Calu3 (cell line): ENCODE measurements at regions of chr3 and their contacts with region 1.

Region 1: GRCh38 chr3:63818281-63819150 is 583 bp upstream of the C3orf49 start:
- DNase-seq: peak; percentile 66
- H3K4me3 Mint-ChIP-seq: no peak overlapping the region
- H3K27ac Mint-ChIP-seq: no peak overlapping the region
- H3K4me1 Mint-ChIP-seq: peaks cover 26% of the 10 kb centered on the region
- H3K27me3 Mint-ChIP-seq: no peaks in the 10 kb centered on the region
- CTCF ChIP-seq: peak; percentile 62

Region 2: DNA sequence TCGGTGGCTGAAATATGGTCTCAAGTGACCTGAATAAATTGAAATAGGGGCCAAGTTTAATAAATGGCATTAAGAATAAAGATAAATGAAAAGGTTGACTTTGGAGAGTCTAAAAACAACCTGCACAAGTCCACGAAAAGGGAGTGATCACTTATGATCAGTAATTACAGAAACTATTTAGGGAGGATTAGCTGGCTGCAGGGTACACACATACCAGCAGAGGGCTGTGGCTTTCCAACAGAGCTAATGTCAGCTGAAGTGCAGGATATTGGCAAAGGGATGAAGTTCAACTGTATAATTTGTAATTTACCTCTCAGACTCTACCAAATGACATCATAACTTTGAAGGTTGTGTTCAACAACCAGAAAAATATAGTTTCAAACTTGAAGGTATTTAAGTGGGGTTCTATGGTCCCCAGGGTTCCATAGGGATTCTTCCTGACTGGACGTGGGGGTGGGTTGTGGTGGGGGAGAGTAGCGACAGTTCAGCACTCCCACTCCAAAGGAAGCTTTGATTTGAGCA is 453.5 kb before region 1 on chr3:
- CTCF ChIA-PET with region 1: interaction called, 3 read pairs
- intact Hi-C with region 1: loop called (anchors 1 kb)
- DNase-seq: peak; percentile 28
- H3K4me3 Mint-ChIP-seq: no peak overlapping the region
- H3K27ac Mint-ChIP-seq: no peak overlapping the region
- H3K4me1 Mint-ChIP-seq: peaks cover 8% of the 10 kb centered on the region
- H3K27me3 Mint-ChIP-seq: peaks cover 24% of the 10 kb centered on the region
- CTCF ChIP-seq: peak; percentile 23

Region 3: GRCh38 chr3:63576901-63577335 is 241.6 kb before region 1 on chr3:
- CTCF ChIA-PET with region 1: no interaction called
- intact Hi-C with region 1: loop called (anchors 10 kb)
- DNase-seq: peak; percentile 12
- H3K4me3 Mint-ChIP-seq: no peak overlapping the region
- H3K27ac Mint-ChIP-seq: peak overlapping the region; percentile 33
- H3K4me1 Mint-ChIP-seq: peaks cover 42% of the 10 kb centered on the region
- H3K27me3 Mint-ChIP-seq: no peaks in the 10 kb centered on the region
- CTCF ChIP-seq: no peak

Region 4: DNA sequence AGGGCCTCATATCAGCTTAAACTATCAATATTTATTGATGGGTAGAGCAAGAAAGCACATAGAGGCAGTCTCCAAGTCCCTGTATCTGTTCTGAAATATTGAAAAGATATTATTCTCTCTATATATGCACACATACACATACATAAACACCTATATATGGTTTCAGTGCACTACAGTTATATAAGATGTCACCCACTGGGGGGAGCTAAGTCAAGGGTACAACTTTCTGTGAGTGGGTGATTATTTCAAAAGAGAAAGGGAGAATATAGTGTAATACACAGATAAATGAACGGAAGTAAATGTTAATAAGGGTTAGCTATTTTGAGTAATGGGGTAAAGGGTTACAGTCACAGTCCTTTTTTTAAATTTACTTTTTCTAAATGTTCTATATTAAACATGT is 157.3 kb before region 1 on chr3:
- CTCF ChIA-PET with region 1: interaction called, 3 read pairs
- intact Hi-C with region 1: loop called (anchors 2 kb)
- DNase-seq: peak; percentile 23
- H3K4me3 Mint-ChIP-seq: no peak overlapping the region
- H3K27ac Mint-ChIP-seq: no peak overlapping the region
- H3K4me1 Mint-ChIP-seq: peaks cover 1% of the 10 kb centered on the region
- H3K27me3 Mint-ChIP-seq: no peaks in the 10 kb centered on the region
- CTCF ChIP-seq: no peak

Region 5: DNA sequence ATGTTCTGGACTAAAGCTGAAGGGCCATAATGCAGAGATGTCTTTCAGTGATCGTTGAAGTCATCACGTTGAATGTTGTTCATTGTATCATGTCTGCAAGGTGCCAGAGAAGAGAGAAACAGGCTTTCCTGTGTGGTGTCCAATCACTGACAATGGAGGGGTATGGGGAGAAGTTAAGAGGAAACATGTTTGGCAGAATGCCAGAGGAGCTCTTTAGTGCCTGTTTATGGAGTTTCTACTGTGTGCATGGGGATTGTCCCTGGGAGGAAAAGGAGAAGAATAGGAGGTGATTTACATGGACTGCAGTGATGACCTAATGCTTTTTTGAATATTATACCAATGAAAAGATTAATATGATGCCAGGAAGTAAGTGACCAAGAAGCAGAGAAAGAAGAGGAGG is 81.9 kb after region 1 on chr3:
- CTCF ChIA-PET with region 1: no interaction called
- intact Hi-C with region 1: no loop called
- DNase-seq: no peak
- H3K4me3 Mint-ChIP-seq: no peak overlapping the region
- H3K27ac Mint-ChIP-seq: peak overlapping the region; percentile 42
- H3K4me1 Mint-ChIP-seq: peaks cover 9% of the 10 kb centered on the region
- H3K27me3 Mint-ChIP-seq: no peaks in the 10 kb centered on the region
- CTCF ChIP-seq: no peak

Region 6: GRCh38 chr3:63911873-63912767 is 93.6 kb after region 1 on chr3 and contains the start of gene SCAANT1:
- CTCF ChIA-PET with region 1: no interaction called
- intact Hi-C with region 1: no loop called
- DNase-seq: peak; percentile 93
- H3K4me3 Mint-ChIP-seq: peak within 1 kb of the TSS; percentile 88
- H3K27ac Mint-ChIP-seq: peak within 1 kb of the TSS; percentile 77
- H3K4me1 Mint-ChIP-seq: peaks cover 25% of the 10 kb centered on the region
- H3K27me3 Mint-ChIP-seq: no peaks in the 10 kb centered on the region
- CTCF ChIP-seq: no peak
- total RNA-seq, gene SCAANT1: not detected in 2 replicates